ENCODE measurements at regions of chr1 and their contacts with region 1.

Region 1: GRCh38 chr1:204941421-204942338 is 71.0 kb downstream of the NFASC start:
- DNase-seq: peak; percentile 77
- ATAC-seq: peak; percentile 83

Region 2: GRCh38 chr1:204806943-204807687 is 134.6 kb before region 1 on chr1:
- intact Hi-C with region 1: loop called (anchors 2 kb)
- DNase-seq: peak; percentile 85
- ATAC-seq: peak; percentile 97

Region 3: DNA sequence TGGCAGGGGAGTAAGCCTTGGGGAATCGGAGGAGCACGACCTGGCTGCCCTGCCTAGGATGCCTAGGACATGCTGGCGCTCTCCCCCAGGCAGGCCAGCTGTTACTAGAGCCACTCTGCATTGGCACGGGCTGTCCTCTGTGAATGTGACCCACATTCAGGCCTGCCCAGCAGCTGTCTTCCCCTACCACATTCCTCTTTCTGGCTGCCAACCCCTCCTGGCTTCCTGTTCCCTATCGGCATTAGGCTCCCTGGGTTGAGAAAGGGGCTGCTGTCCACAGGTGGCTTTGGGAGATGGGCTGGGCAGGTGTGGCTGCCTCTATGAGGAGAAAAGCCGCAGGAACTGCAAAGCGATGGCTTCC is 73.4 kb before region 1 on chr1:
- intact Hi-C with region 1: no loop called
- DNase-seq: peak; percentile 51
- ATAC-seq: peak; percentile 75